MCF 10A (cell line): ENCODE measurements at regions of chr2 and their contacts with region 1.

Region 1: DNA sequence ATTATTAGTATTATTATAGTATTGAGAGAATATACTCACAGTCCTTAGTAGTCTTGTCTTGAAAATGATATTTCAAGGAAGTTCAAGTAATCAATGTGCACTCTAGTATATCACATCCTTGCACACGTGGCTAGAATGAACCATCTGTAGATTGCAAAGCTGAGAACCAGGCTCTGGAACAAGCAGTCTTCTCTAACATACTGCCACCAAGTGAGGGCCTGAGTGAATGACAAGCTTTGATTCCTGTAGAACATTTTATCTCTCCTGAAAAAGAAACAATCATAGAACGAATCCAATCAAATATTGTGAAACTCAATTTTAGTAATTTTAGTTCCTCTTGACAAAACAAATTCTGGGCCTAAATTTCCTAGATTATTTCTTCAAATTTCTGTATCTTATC is 55.3 kb upstream of the SULT1C3 start:
- DNase-seq: peak; percentile 47
- H3K4me3 Mint-ChIP-seq: no peak overlapping the region
- H3K27ac Mint-ChIP-seq: no peak overlapping the region
- H3K4me1 Mint-ChIP-seq: no peaks in the 10 kb centered on the region
- H3K27me3 Mint-ChIP-seq: peaks cover 23% of the 10 kb centered on the region
- CTCF ChIP-seq: peak; percentile 42

Region 2: DNA sequence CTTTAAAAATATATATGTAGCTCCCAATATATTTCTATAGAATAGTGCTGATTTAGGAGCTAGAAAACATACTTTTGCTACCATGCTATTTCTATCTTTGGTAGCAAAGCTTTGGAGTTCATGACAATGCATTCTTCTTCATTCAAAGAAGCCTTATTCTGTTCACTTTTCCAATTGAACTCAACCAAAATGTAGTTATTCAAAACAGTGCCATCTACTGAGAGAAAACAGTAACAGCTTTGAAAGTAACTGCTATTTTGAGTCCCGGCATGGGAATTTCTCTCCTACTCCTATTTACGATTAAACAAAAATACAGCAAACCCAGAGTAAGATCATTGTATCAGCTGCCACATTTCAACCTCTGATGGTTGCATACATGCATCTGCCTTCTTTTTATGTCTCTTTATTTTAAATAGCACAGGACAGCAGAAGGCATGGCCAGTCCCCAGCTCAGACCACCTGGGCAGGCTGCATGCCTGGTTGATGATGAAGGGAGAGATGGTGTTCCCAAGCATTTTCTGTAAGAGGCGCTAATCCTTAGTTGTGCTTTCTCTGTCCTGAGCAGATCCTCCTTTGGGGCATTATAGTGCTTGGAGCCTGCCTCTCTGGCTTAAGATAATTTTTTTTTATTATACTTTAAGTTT is 14.3 kb before region 1 on chr2:
- CTCF ChIA-PET with region 1: interaction called, 19 read pairs
- POLR2A ChIA-PET with region 1: interaction called, 4 read pairs
- intact Hi-C with region 1: no loop called
- DNase-seq: peak; percentile 42
- H3K4me3 Mint-ChIP-seq: no peak overlapping the region
- H3K27ac Mint-ChIP-seq: no peak overlapping the region
- H3K4me1 Mint-ChIP-seq: no peaks in the 10 kb centered on the region
- H3K27me3 Mint-ChIP-seq: peaks cover 49% of the 10 kb centered on the region
- CTCF ChIP-seq: peak; percentile 43

Region 3: GRCh38 chr2:108194409-108195132 is 10.2 kb after region 1 on chr2:
- CTCF ChIA-PET with region 1: interaction called, 14 read pairs
- POLR2A ChIA-PET with region 1: no interaction called
- intact Hi-C with region 1: no loop called
- DNase-seq: no peak
- H3K4me3 Mint-ChIP-seq: no peak overlapping the region
- H3K27ac Mint-ChIP-seq: no peak overlapping the region
- H3K4me1 Mint-ChIP-seq: peaks cover 5% of the 10 kb centered on the region
- H3K27me3 Mint-ChIP-seq: no peaks in the 10 kb centered on the region
- CTCF ChIP-seq: no peak